Heart right ventricle (tissue), 16 donors: ENCODE measurements at regions of chr4 and their contacts with region 1.

Region 1: DNA sequence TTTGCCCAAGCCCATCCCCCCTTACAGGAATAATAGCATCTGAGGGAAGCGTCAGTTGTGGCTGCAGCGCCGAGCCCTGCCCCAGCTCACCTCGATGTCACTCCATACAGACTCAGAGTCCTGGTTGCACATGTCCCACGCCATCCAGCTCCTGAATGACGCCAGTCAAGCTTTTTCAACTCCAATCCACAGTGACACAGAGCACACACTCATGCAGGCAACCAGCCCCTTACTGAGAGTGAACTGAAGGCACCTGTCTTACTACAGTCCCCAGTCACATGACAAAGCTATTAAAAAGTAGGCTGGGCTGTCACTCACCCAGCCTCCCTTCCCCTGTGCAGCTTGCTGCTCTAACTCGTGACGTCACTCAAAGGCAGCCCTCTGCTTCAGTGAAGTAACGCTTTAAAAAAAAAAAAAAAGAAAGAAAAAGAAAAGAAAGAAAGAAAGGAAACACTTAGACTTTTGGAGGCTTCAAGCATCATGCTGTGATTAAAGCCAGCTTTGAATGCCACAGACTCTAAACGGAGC is at the start of gene PPARGC1A:
- DNase-seq: peak; percentile 41 to 69
- ATAC-seq: peak; percentile 86 to 96 (median 92)
- H3K4me3 ChIP-seq: peak within 1 kb of the TSS; percentile 31 to 63 (median 58)
- H3K27ac ChIP-seq: peak within 1 kb of the TSS; percentile 61 to 90 (median 82)
- H3K4me1 ChIP-seq: peaks cover 0 to 27% (median 7%) of the 10 kb centered on the region in 9 donors
- H3K27me3 ChIP-seq: no peaks in the 10 kb centered on the region
- CTCF ChIP-seq: no peak
- total RNA-seq, gene PPARGC1A: 66.3 to 200 (median 106) TPM

Region 2: DNA sequence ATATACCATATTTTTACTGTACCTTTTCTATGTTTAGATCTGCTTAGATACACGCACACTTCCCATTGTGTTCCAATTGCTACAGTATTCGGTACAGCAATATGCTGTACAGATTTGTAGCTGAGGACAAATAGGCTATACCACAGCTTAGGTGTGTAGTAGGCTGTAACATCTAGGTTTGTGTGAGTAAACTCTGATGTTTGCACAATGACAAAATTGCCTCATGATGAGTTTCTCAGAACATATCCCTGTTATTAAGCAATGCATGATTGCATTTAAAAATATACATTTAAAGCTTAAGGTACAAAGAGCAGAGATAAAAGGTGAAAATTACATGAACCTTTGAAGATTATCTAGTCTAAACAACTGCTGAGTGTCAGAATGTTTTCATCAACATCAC is 1555.7 kb before region 1 on chr4:
- intact Hi-C with region 1: loop called in 1 of 10 experiments (anchors 5 kb)
- DNase-seq: no peak
- ATAC-seq: no peak
- H3K4me3 ChIP-seq: no peak overlapping the region
- H3K27ac ChIP-seq: no peak overlapping the region
- H3K4me1 ChIP-seq: no peaks in the 10 kb centered on the region
- H3K27me3 ChIP-seq: no peaks in the 10 kb centered on the region
- CTCF ChIP-seq: no peak

Region 3: GRCh38 chr4:23819041-23819511 is 70.8 kb before region 1 on chr4:
- intact Hi-C with region 1: loop called in 1 of 10 experiments (anchors 5 kb)
- DNase-seq: peak in 1 of 2 donors; percentile 19
- ATAC-seq: peak in 7 of 8 donors; percentile 66 to 91 (median 80)
- H3K4me3 ChIP-seq: no peak overlapping the region
- H3K27ac ChIP-seq: peak overlapping the region in 5 of 10 donors; percentile 37 to 78 (median 62)
- H3K4me1 ChIP-seq: peaks cover 0 to 29% (median 18%) of the 10 kb centered on the region in 9 donors
- H3K27me3 ChIP-seq: no peaks in the 10 kb centered on the region
- CTCF ChIP-seq: no peak

Region 4: DNA sequence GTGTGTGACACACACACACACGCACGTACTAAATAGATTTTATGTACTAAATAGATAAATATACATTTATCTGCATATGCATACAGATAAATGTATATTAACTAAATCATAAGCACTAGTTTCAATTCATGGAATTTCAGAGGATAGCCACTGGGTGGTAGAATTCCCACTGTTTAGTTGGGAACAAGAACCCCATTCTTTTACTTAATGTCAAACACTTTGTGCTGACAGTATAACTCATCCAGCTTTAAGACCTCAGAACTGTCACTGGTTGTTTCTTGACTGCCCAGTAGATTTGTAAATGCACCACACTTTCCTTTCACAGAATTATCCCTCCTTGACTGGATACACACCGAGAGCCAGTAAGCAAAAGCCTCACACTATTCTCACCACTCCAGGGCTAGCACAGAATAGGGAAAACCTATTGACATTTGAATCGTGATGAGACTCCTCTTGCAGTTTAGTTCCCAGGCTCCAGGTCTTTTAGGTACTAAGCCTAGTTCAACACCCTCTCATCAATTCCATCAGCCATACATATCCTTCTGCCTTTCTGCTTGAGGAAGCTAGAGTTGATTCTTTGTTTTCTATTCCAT is 32.4 kb before region 1 on chr4:
- intact Hi-C with region 1: no loop called
- DNase-seq: no peak
- ATAC-seq: no peak
- H3K4me3 ChIP-seq: no peak overlapping the region
- H3K27ac ChIP-seq: peak overlapping the region in 5 of 10 donors; percentile 17 to 81 (median 75)
- H3K4me1 ChIP-seq: peaks cover 4 to 65% (median 24%) of the 10 kb centered on the region in 9 donors
- H3K27me3 ChIP-seq: no peaks in the 10 kb centered on the region
- CTCF ChIP-seq: peak in 5 of 9 donors; percentile 15 to 32 (median 29)

Region 5: DNA sequence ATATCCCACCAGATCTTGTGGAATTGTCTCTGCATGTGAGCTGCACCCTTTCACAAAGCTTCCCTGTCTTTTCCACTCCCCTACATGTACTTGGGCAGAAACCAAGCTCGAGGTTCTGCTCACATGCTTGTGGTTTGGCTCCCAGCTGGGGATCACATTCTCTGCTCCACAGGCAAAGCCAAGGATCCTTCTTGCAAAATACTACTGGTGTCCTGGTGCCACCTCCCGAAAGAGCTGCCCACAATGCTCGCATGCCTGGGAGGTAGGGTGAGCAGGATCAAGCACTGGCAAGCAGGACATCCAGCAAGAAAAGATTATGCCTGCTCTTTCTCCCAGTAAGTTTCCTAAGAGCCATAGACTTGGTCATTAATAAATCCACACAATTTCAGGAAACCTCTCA is 45.0 kb after region 1 on chr4:
- intact Hi-C with region 1: loop called in 5 of 10 experiments (anchors 1 to 5 kb)
- DNase-seq: peak; percentile 47 to 74
- ATAC-seq: peak; percentile 58 to 78 (median 71)
- H3K4me3 ChIP-seq: no peak overlapping the region
- H3K27ac ChIP-seq: peak overlapping the region; percentile 2 to 89 (median 62)
- H3K4me1 ChIP-seq: peaks cover 0 to 52% (median 22%) of the 10 kb centered on the region in 9 donors
- H3K27me3 ChIP-seq: no peaks in the 10 kb centered on the region
- CTCF ChIP-seq: peak in 3 of 9 donors; percentile 23 to 42 (median 25)

Region 6: DNA sequence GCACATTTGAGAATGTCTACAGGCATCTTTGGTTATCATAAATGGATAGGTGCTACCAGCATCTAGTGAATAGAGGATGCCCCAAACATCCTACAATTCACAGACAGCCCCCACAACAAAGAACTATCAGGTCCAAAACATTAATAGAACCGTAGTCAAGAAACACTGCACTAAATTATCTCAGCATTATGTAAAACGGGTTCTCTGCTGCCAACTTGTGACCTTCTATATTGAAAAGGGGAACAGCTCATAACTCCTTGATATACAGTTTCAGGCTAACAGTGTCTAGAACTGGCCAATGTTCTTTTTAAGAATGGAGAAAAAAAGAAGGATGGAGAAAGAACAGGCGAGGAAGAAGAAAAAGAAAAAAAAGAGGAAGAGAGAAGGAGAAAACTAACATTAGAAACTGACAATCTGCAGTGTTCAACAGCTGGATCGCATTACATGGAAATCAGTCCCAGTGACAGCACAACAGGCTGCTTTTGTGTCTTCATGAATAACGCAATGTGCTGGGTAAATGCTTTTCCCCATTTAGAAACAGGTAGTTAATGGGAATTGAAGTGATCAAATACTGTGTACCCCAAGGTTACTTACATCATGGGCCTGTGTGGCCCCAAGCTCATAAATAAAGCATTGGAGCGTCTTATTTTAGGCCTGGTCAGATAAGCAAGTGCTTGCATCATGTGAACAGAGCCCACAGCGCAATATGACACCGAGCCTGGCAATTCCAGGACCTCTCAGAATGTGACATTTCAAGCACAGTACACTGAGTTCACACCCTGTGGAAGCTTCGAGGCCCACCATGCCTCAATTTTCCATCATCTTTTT is 355.0 kb after region 1 on chr4:
- intact Hi-C with region 1: loop called in 1 of 10 experiments (anchors 5 kb)
- DNase-seq: peak; percentile 46 to 75
- ATAC-seq: peak; percentile 73 to 97 (median 92)
- H3K4me3 ChIP-seq: no peak overlapping the region
- H3K27ac ChIP-seq: peak overlapping the region; percentile 29 to 90 (median 78)
- H3K4me1 ChIP-seq: peaks cover 11 to 73% (median 41%) of the 10 kb centered on the region in 9 donors
- H3K27me3 ChIP-seq: no peaks in the 10 kb centered on the region
- CTCF ChIP-seq: no peak